CD14-positive monocyte (primary cell): ENCODE measurements at regions of chr11 and their contacts with region 1.

Region 1: DNA sequence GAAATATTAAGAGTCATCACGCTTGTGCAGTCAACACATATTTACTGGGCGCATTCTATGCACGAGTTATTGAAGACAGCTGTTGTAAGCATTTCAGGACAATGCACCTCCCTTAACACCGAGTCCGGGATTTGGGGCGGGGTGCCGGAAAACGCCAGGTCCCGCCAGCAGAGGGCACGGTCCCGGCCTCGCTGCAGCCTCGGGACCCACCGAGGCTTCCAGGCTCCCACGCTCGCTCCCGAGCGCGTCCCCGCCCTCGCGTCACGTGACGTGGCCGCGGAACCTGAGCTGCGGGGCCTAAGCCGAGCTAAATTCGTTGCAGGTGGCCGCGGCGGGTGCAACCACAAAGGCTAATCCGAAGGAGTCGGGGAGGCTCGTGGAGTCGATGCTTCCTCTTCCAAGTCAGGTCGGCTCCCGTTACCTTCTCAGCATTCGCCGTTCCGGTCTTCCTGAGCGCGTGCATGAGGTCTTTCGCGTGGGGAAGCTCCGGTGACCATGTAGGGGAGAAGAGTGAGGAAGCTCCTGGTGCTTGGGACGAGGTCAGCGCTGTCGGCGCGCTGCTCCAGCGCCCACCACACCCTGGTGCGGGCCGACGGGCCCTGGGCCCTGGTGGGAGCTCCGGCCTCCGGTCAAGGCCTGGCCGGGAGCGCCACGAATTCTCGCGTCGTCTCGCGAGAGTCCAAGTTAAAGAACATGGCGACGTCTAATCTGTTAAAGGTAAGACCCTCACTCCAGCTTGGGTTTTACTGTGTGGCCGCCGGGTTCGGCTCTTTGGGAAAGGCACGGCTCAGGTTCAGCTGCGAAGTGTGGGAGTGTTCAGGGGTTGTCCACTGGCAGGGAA is at the start of gene CUL5:
- DNase-seq: peak; percentile 86 to 93 (median 91)
- H3K4me3 ChIP-seq: peak within 1 kb of the TSS; percentile 63 to 95 (median 87)
- H3K4me3 Mint-ChIP-seq: peak within 1 kb of the TSS; percentile 94 to 97
- H3K27ac ChIP-seq: peak within 1 kb of the TSS; percentile 97 to 98
- H3K27ac Mint-ChIP-seq: peak within 1 kb of the TSS; percentile 96 to 99 (median 98)
- H3K4me1 ChIP-seq: peaks cover 18 to 33% of the 10 kb centered on the region in 2 donors
- H3K4me1 Mint-ChIP-seq: peaks cover 14% of the 10 kb centered on the region
- H3K27me3 ChIP-seq: no peaks in the 10 kb centered on the region
- H3K27me3 Mint-ChIP-seq: no peaks in the 10 kb centered on the region
- CTCF ChIP-seq: peak; percentile 89
- polyA plus RNA-seq, gene CUL5: 24.7 to 37.8 (median 36.7) TPM

Region 2: DNA sequence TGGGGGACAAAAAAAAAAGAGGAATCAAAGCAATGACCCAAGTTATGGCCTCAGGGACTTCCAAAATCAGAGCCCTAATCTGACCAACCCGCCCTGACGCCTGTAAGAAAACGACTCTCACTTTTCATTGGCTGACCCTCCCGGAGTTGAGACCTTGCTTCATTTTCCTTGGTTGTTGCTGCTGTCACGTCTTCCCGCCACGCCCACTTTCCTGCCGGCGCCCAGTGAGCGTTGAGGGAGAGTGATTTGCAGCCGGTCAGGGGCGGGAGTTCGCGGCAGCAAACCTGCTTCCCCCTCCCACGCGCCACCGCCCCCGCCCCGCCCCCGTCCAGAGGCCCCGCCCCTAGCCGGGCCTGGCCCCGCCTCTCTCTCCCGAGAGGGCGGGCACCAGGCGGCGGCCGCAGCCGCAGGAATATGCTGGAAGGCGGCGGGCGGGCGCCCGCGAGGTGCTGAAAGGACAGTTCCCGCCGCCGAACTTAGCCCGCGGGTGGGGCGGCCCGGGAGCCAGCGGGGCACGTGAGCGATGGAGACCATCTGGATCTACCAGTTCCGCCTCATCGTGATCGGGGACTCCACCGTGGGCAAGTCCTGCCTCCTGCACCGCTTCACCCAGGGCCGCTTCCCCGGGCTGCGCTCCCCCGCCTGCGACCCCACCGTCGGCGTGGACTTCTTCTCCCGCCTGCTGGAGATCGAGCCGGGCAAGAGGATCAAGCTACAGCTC is 80.7 kb before region 1 on chr11 and contains the start of gene RAB39A:
- intact Hi-C with region 1: loop called (anchors 10 kb)
- DNase-seq: peak; percentile 96 to 99 (median 98)
- H3K4me3 ChIP-seq: peak within 1 kb of the TSS; percentile 88 to 96 (median 91)
- H3K4me3 Mint-ChIP-seq: peak within 1 kb of the TSS; percentile 96 to 97
- H3K27ac ChIP-seq: peak within 1 kb of the TSS; percentile 83 to 87
- H3K27ac Mint-ChIP-seq: peak within 1 kb of the TSS; percentile 87 to 97 (median 92)
- H3K4me1 ChIP-seq: peaks cover 22 to 31% of the 10 kb centered on the region in 2 donors
- H3K4me1 Mint-ChIP-seq: peaks cover 33% of the 10 kb centered on the region
- H3K27me3 ChIP-seq: no peaks in the 10 kb centered on the region
- H3K27me3 Mint-ChIP-seq: peaks cover 0 to 14% (median 7%) of the 10 kb centered on the region in 3 donors
- CTCF ChIP-seq: no peak
- polyA plus RNA-seq, gene RAB39A: 1.9 to 6.3 (median 3.9) TPM